ENCODE measurements at regions of chr11 and their contacts with region 1.

Region 1: DNA sequence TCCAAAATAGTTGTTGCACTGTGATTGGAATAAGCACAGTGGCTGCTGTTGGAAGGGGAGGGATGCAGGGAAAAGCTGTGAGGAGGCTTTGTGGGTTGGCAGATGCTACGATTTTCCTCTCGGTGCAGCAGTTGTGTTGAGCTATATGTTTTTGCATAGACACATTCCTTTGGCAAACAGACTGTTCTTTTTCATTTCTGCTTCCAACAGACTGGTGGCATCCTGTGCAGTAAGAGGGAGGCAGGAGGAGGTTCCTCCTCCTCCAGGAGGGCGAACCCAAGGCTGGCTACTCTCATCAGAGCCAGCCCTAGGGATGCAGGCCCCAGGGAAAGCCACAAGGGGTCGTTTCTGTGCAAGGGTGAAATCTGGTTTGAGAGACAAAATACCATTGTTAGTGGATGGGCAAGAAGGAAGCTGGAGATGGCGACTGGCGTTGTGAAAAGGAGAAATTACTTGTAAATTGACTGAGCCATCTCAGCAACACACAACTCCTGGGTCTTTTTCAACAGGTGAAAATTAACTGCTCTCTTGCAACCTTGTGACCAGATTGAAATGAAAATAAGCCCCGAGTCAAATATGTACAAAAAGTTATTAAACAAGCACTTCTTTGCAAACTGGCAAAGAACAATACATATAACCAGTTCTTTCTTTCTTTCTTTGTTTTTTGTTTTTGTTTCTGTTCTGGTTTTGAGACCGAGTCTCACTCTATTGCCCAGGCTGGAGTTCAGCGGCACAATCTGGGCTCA is 26.5 kb upstream of the UBASH3B start:
- DNase-seq: peak; percentile 94
- ATAC-seq: peak; percentile 96
- H3K4me3 ChIP-seq: no peak overlapping the region
- H3K27ac ChIP-seq: no peak overlapping the region
- H3K4me1 ChIP-seq: peaks cover 14% of the 10 kb centered on the region; the same call in 1 of the 2 replicates
- H3K27me3 ChIP-seq: no peaks in the 10 kb centered on the region
- CTCF ChIP-seq: peak; percentile 98

Region 2: GRCh38 chr11:122453586-122453985 is 175.4 kb before region 1 on chr11:
- CTCF ChIA-PET with region 1: no interaction called
- POLR2A ChIA-PET with region 1: no interaction called
- intact Hi-C with region 1: no loop called
- DNase-seq: no peak
- ATAC-seq: no peak
- H3K4me3 ChIP-seq: no peak overlapping the region
- H3K27ac ChIP-seq: no peak overlapping the region
- H3K4me1 ChIP-seq: no peaks in the 10 kb centered on the region
- H3K27me3 ChIP-seq: peaks cover 78% of the 10 kb centered on the region
- CTCF ChIP-seq: no peak

Region 3: GRCh38 chr11:122578168-122578825 is 50.7 kb before region 1 on chr11:
- CTCF ChIA-PET with region 1: interaction called, 6 read pairs
- POLR2A ChIA-PET with region 1: no interaction called
- intact Hi-C with region 1: loop called (anchors 1 kb)
- DNase-seq: peak; percentile 25
- ATAC-seq: no peak
- H3K4me3 ChIP-seq: no peak overlapping the region
- H3K27ac ChIP-seq: no peak overlapping the region
- H3K4me1 ChIP-seq: peaks cover 12% of the 10 kb centered on the region
- H3K27me3 ChIP-seq: no peaks in the 10 kb centered on the region
- CTCF ChIP-seq: peak; percentile 44; the same call in 1 of the 2 replicates

Region 4: GRCh38 chr11:122668562-122669090 is 39.6 kb after region 1 on chr11:
- CTCF ChIA-PET with region 1: no interaction called
- POLR2A ChIA-PET with region 1: no interaction called
- intact Hi-C with region 1: no loop called
- DNase-seq: peak; percentile 97
- ATAC-seq: peak; percentile 87
- H3K4me3 ChIP-seq: peak overlapping the region; percentile 30; the same call in 1 of the 2 replicates
- H3K27ac ChIP-seq: peak overlapping the region; percentile 93
- H3K4me1 ChIP-seq: peaks cover 42% of the 10 kb centered on the region
- H3K27me3 ChIP-seq: no peaks in the 10 kb centered on the region
- CTCF ChIP-seq: no peak

Region 5: GRCh38 chr11:122709039-122709760 is 80.2 kb after region 1 on chr11:
- CTCF ChIA-PET with region 1: no interaction called
- POLR2A ChIA-PET with region 1: no interaction called
- intact Hi-C with region 1: loop called (anchors 5 kb)
- DNase-seq: peak; percentile 85
- ATAC-seq: peak; percentile 75
- H3K4me3 ChIP-seq: no peak overlapping the region
- H3K27ac ChIP-seq: peak overlapping the region; percentile 71
- H3K4me1 ChIP-seq: peaks cover 57% of the 10 kb centered on the region
- H3K27me3 ChIP-seq: no peaks in the 10 kb centered on the region
- CTCF ChIP-seq: no peak

Region 6: GRCh38 chr11:122754553-122755322 is 125.8 kb after region 1 on chr11:
- CTCF ChIA-PET with region 1: interaction called, 4 read pairs
- POLR2A ChIA-PET with region 1: no interaction called
- intact Hi-C with region 1: loop called (anchors 1 kb)
- DNase-seq: peak; percentile 63
- ATAC-seq: peak; percentile 78
- H3K4me3 ChIP-seq: no peak overlapping the region
- H3K27ac ChIP-seq: no peak overlapping the region
- H3K4me1 ChIP-seq: no peaks in the 10 kb centered on the region
- H3K27me3 ChIP-seq: no peaks in the 10 kb centered on the region
- CTCF ChIP-seq: peak; percentile 84

Region 7: GRCh38 chr11:122781378-122782195 is 152.6 kb after region 1 on chr11:
- CTCF ChIA-PET with region 1: interaction called, 23 read pairs
- POLR2A ChIA-PET with region 1: interaction called, 3 read pairs
- intact Hi-C with region 1: loop called (anchors 1 kb)
- DNase-seq: peak; percentile 95
- ATAC-seq: peak; percentile 98
- H3K4me3 ChIP-seq: no peak overlapping the region
- H3K27ac ChIP-seq: no peak overlapping the region
- H3K4me1 ChIP-seq: peaks cover 14% of the 10 kb centered on the region
- H3K27me3 ChIP-seq: no peaks in the 10 kb centered on the region
- CTCF ChIP-seq: peak; percentile 98

Region 8: GRCh38 chr11:122808478-122808869 is 179.5 kb after region 1 on chr11:
- CTCF ChIA-PET with region 1: interaction called, 10 read pairs
- POLR2A ChIA-PET with region 1: no interaction called
- intact Hi-C with region 1: no loop called
- DNase-seq: no peak
- ATAC-seq: no peak
- H3K4me3 ChIP-seq: no peak overlapping the region
- H3K27ac ChIP-seq: peak overlapping the region; percentile 12; the same call in 1 of the 2 replicates
- H3K4me1 ChIP-seq: peaks cover 22% of the 10 kb centered on the region
- H3K27me3 ChIP-seq: no peaks in the 10 kb centered on the region
- CTCF ChIP-seq: no peak

Measured in PC-3 (cell line).